Right cardiac atrium (tissue), 5 donors: ENCODE measurements at regions of chr18 and their contacts with region 1.

Region 1: GRCh38 chr18:53665701-53666100 is 558.8 kb downstream of the MBD2 start:
- DNase-seq: no peak
- ATAC-seq: no peak
- H3K4me3 ChIP-seq: no peak overlapping the region
- H3K27ac ChIP-seq: no peak overlapping the region
- H3K4me1 ChIP-seq: no peaks in the 10 kb centered on the region
- H3K27me3 ChIP-seq: no peaks in the 10 kb centered on the region

Region 2: DNA sequence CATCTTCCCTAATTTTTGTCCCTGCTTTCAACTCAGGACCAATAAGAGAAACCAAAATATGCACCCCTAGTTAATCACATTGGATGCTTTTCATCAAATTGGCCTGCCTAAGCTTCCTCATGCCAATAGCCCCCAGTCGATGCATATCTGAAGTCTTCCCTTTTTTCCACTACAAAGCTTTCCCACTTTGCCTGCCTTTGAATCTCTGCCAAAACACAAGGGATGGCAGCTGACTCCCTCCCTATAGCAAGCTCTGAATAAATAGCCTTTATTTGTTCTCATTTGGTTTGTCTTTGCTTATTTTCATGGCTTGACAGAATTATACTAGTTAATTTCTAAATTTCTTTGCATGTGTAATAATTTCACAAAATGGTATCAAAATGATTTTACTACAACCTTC is 62.4 kb before region 1 on chr18:
- intact Hi-C with region 1: loop called in 1 of 4 experiments (anchors 10 kb)
- DNase-seq: no peak
- ATAC-seq: no peak
- H3K4me3 ChIP-seq: no peak overlapping the region
- H3K27ac ChIP-seq: no peak overlapping the region
- H3K4me1 ChIP-seq: no peaks in the 10 kb centered on the region
- H3K27me3 ChIP-seq: no peaks in the 10 kb centered on the region